Endothelial cell of umbilical vein (primary cell): ENCODE measurements at regions of chr2 and their contacts with region 1.

Region 1: DNA sequence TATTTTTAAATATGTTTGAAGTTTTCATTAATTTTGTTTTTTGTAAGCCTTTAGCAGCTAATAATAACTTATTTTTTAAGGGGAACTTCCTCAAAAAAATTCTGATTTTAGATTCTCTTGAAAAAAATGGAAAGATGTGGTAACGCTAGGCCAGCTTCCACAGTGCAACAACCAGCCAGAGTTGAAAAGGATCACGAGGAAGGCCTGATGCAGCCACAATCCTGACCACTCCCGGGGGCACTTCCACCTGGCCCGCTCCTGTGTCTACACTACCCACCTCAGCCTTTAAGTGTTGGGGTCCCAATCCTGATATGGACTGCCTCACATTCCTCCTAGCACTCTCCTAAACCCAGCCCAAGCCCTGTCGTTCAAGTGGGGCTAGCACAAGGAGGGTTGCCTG is 101.1 kb downstream of the TMEM17 start:
- DNase-seq: no peak
- H3K4me3 ChIP-seq: no peak overlapping the region
- H3K27ac ChIP-seq: no peak overlapping the region
- H3K4me1 ChIP-seq: no peaks in the 10 kb centered on the region
- H3K27me3 ChIP-seq: no peaks in the 10 kb centered on the region
- CTCF ChIP-seq: no peak
- POLR2A ChIP-seq: no peak

Region 2: GRCh38 chr2:62074233-62074632 is 330.7 kb before region 1 on chr2:
- CTCF ChIA-PET with region 1: no interaction called
- POLR2A ChIA-PET with region 1: interaction called, 16 read pairs
- dilution Hi-C with region 1: no loop called
- intact Hi-C with region 1: no loop called
- DNase-seq: no peak
- H3K4me3 ChIP-seq: no peak overlapping the region
- H3K27ac ChIP-seq: no peak overlapping the region
- H3K4me1 ChIP-seq: no peaks in the 10 kb centered on the region
- H3K27me3 ChIP-seq: no peaks in the 10 kb centered on the region
- CTCF ChIP-seq: no peak
- POLR2A ChIP-seq: no peak